ENCODE measurements at regions of chr3 and their contacts with region 1.

Region 1: DNA sequence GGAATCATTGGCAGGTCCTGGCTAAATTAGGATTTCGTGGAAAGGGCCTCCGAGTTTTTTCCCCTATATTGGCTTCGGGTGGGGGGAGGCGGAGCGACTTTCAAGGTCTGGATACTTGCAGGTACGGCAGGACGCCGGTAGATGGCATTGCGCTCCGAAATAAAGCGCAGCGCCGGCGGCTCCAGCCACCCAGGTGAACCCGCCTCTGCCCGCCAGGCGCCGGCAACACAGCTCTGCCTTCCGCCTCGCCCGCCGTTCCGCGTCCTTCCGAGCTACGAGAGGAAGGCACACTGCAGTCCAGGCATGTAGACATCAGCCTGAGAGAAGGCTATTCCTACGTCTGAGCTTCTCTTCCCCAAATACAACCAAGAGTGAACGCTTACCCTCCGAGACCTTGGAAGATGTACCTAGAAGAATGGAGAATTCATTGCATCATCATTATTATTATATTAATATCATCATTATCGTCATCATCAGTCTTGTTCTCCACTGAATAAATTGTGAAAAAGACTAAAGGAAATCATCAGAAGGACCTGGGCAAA is 514.1 kb downstream of the MECOM start:
- DNase-seq: peak; percentile 86
- H3K4me3 Mint-ChIP-seq: peak overlapping the region; percentile 81
- H3K27ac Mint-ChIP-seq: no peak overlapping the region
- H3K4me1 Mint-ChIP-seq: peaks cover 9% of the 10 kb centered on the region
- H3K27me3 Mint-ChIP-seq: no peaks in the 10 kb centered on the region
- CTCF ChIP-seq: peak; percentile 73

Region 2: GRCh38 chr3:168894214-168894613 is 255.2 kb before region 1 on chr3:
- CTCF ChIA-PET with region 1: no interaction called
- POLR2A ChIA-PET with region 1: no interaction called
- intact Hi-C with region 1: no loop called
- DNase-seq: no peak
- H3K4me3 Mint-ChIP-seq: no peak overlapping the region
- H3K27ac Mint-ChIP-seq: no peak overlapping the region
- H3K4me1 Mint-ChIP-seq: no peaks in the 10 kb centered on the region
- H3K27me3 Mint-ChIP-seq: no peaks in the 10 kb centered on the region
- CTCF ChIP-seq: no peak

Region 3: GRCh38 chr3:169052465-169053302 is 96.7 kb before region 1 on chr3:
- CTCF ChIA-PET with region 1: interaction called, 15 read pairs
- POLR2A ChIA-PET with region 1: interaction called, 3 read pairs
- intact Hi-C with region 1: no loop called
- DNase-seq: peak; percentile 57
- H3K4me3 Mint-ChIP-seq: no peak overlapping the region
- H3K27ac Mint-ChIP-seq: peak overlapping the region; percentile 81
- H3K4me1 Mint-ChIP-seq: peaks cover 11% of the 10 kb centered on the region
- H3K27me3 Mint-ChIP-seq: no peaks in the 10 kb centered on the region
- CTCF ChIP-seq: no peak

Region 4: DNA sequence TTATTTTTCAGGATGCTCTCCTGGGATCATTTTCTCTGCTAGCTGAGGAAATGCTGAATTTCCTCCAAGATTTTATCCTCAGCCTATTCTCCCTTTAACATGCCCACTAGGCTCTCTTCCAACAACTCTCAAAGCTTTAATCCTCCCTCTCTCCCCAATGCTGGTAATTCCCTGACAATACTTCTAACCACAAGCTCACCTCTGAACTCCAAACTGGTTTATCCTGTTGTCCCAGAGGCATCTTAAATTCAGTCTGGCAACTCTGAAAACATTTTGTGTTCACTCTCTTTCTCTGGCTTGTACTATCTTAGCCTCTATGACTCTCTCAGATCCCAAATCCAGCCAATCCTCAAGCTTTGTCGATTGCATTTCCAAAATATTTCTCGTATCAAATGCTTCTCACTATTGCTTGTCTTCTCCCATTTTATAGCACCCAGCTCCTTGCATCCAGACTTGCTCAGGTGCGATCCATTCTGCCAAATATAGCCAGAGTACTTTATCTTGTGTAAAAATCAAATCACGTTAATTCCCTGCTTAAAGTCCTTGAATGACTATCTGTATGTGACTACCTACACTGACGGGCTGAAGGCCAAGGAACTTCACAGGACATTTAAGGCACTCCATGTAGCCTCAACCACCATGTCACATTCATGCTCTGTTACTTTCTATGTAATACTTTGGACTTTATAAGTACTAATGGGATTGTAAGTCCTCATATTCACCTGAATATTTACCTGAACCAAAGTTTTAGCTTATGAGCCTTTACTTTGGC is 24.0 kb after region 1 on chr3:
- CTCF ChIA-PET with region 1: interaction called, 13 read pairs
- POLR2A ChIA-PET with region 1: interaction called, 4 read pairs
- intact Hi-C with region 1: no loop called
- DNase-seq: no peak
- H3K4me3 Mint-ChIP-seq: no peak overlapping the region
- H3K27ac Mint-ChIP-seq: no peak overlapping the region
- H3K4me1 Mint-ChIP-seq: peaks cover 18% of the 10 kb centered on the region
- H3K27me3 Mint-ChIP-seq: no peaks in the 10 kb centered on the region
- CTCF ChIP-seq: no peak

Region 5: DNA sequence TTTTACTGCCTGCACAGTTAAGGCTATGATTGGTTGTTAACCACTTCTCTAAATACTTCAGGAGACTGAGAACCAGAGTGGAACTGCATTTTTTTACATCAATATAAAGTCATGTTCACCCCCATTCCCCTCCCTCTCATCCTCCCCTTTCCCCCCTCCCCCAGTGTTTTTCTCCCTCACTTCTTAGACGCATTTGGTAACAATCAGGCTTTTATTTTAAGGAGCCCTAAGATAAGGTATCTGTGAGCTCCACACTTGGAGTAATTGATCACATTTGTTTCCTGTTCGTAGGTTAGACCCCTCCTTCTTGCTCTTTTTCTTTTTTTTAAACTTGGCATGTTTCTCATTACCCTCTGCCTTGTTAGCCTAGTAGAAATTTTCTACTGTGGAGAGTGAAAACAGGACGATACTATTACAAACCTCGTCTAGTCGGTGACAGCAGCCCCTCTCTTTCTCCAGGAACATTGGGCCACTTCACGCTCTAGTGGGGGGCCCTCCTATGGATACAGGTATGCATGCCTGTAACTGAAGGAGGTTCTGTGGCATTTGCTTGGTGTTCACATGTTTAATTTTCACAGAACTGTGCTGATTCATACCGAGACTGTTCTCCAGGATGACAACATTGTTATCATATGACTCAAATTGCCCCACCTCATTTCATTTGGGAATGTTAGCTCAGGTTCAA is 199.7 kb after region 1 on chr3:
- CTCF ChIA-PET with region 1: interaction called, 5 read pairs
- POLR2A ChIA-PET with region 1: interaction called, 4 read pairs
- intact Hi-C with region 1: loop called (anchors 1 kb)
- DNase-seq: peak; percentile 75
- H3K4me3 Mint-ChIP-seq: peak overlapping the region; percentile 61
- H3K27ac Mint-ChIP-seq: peak overlapping the region; percentile 98
- H3K4me1 Mint-ChIP-seq: peaks cover 31% of the 10 kb centered on the region
- H3K27me3 Mint-ChIP-seq: no peaks in the 10 kb centered on the region
- CTCF ChIP-seq: no peak

Region 6: DNA sequence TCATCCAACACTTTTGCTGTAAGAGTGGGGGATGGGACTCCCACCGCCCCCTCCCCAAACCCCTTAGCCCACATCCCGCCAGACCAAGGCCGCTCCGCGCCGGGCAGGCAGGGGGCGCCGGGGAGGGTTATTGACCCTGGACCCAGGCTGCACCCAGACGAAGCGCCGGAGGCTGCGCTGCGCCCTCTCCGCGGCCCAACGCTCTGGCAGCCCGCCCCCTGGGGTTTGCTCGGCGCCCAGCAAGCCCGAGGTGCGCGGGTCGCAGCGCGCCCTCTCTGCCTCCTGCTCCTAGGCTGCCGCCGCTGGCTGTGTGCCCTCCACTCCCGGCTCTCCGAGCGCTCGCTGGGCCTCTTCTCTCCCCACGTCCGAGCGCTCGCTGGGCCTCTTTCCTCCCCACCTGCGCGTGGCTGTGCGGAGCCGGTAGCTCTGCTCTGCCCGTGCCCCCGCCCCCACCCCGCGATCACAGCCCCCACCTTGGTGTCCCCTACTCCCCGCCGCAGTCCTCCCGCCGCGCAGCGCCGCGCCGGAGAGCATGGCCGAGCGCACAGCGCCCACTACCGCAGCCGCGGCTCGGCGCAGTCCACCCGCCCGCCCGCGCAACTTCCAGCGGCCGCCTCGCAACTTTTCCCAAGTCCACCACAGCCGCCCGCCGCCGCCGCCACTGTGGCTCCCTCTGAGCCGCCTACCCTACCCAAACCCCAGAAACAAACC is 512.9 kb after region 1 on chr3:
- CTCF ChIA-PET with region 1: interaction called, 163 read pairs
- POLR2A ChIA-PET with region 1: interaction called, 22 read pairs
- intact Hi-C with region 1: loop called (anchors 1 kb)
- DNase-seq: peak; percentile 74
- H3K4me3 Mint-ChIP-seq: peak overlapping the region; percentile 88
- H3K27ac Mint-ChIP-seq: peak overlapping the region; percentile 57
- H3K4me1 Mint-ChIP-seq: no peaks in the 10 kb centered on the region
- H3K27me3 Mint-ChIP-seq: peaks cover 19% of the 10 kb centered on the region
- CTCF ChIP-seq: peak; percentile 53